ENCODE measurements at regions of chr22 and their contacts with region 1.

Region 1: DNA sequence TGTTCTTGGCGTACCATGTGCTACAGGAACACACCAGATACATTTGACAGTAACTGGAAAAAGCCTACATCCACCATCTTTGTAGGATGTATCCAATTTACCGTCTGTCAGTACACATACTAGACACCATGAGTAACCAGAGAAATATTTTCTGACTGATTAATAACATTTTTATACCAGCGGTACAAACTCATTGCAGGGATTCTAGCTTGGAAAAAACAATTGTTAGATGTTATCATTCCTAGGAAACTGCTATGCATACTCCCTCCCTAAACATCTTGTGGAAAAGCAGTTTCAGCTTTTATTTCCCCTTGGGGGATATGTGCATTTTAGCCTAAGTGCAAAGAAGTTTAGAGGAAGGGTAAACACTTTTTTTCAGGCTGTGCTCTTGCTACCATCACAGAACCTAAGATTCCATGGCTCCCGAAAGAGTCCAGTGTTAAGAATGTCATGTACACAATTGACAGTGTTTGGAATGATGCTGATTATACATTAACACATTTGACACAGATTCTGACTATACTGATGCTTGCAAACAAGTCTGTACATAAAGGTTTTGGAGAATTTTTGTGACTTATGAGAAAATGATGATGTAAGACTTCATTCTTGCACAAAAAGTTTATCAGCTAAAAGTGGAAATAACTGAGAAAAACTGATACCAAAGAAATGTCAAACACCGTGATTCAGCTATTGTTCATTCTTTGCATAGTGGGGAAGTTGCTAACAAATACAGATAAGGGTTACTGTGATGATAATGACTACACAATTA is 23.7 kb downstream of the NCF4 start:
- DNase-seq: no peak
- ATAC-seq: peak in 1 of 2 donors; percentile 55
- H3K4me3 ChIP-seq: no peak overlapping the region
- H3K27ac ChIP-seq: no peak overlapping the region
- H3K4me1 ChIP-seq: no peaks in the 10 kb centered on the region
- H3K27me3 ChIP-seq: no peaks in the 10 kb centered on the region

Region 2: DNA sequence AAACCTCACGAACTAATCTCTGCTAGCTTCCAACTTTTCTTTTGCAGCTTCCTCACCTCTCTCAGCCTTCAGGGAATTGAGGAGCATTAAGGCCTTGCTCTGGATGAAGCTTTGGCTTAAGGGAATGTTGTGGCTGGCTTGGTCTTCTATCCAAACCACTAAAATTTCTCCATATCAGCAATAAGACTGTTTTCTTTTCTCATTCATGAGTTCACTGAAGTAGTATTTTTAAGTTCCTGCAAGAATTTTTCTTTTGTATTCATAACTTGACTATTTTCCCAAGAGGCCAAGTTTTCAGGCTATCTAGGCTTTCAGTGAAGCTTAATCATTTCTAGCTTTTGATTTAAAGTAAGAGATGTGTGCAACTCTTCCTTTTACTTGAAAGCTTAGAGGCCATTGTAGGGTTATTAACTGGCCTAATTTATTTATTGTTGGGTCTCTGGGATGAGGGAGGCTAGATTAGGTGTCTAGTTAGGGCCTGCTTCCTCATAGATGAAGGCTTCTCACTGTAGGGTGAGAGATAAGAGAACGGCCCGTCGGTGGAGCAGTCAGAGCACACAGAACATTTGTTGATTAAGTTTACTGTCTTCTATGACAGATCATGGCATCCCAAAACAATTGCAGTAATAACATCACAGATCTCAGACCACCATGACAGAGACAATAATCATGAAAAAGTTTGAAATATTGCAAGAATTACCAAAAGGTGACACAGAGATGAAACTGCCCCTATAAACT is 62.1 kb after region 1 on chr22:
- intact Hi-C with region 1: loop called in 1 of 4 experiments (anchors 10 kb)
- DNase-seq: no peak
- ATAC-seq: no peak
- H3K4me3 ChIP-seq: no peak overlapping the region
- H3K27ac ChIP-seq: no peak overlapping the region
- H3K4me1 ChIP-seq: no peaks in the 10 kb centered on the region
- H3K27me3 ChIP-seq: no peaks in the 10 kb centered on the region